ACHN (cell line): ENCODE measurements at regions of chr10 and their contacts with region 1.

Region 1: DNA sequence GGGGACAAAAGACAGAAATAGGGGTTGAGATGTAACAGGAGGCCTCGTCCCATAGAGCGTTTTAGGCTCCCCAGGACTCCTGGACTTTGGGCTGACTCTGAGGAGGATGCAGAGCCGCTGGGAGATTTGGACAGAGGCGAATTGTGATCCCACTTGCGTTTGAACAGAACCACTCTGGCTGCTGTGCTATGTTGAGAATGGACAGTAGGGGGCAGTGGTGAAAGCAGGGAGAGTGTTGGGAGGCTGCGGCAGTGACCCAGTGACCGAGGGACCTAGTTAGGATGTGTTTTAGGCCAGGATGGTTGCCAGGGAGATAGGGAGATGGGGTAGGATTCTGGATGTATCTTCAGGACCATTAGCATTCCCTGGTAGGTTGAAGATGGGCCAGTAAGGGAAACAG is 271.6 kb downstream of the CCDC3 start:
- DNase-seq: no peak

Region 2: GRCh38 chr10:12884380-12884779 is 154.5 kb after region 1 on chr10:
- in situ Hi-C with region 1: no loop called
- DNase-seq: no peak

Region 3: GRCh38 chr10:12902135-12902572 is 172.3 kb after region 1 on chr10:
- in situ Hi-C with region 1: loop called (anchors 25 kb)
- DNase-seq: peak; percentile 47